ENCODE measurements at regions of chr10 and their contacts with region 1.

Region 1: DNA sequence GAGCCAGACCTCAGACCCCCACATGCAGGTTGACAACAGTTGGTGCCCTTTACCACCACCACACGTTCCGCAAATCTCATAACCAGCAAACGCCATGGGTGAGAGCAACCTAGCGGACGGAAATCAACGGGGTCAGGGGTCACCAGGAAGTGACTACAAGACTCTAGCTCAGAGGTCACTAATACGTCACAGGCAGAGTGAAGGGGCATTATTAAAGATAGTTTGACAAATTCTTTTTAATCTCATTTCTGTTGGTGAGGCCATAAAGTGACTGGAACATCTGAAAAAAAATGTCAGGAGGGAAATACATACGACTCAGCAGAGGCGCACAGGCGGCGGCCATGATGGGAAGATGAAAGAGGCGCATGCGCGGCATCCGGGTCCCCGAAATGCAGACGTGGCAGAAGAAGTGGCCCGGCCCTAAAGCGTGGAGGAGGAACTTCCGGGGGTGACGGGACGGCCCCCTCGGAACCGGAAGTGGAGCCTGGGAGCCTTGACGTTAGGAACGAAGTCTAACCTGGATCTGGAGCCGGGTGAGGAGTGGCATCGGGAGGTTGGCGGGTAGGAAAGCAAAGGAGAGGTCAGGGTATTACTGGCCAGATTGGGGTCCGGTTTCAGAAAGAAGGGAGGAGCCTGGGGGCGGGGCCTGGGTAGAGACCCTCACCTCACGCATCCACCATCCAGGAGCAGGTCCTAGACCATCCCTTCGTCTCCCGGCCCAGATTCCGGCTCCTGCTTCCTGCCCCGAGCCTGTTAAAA is at the start of gene SEC24C:
- DNase-seq: peak; percentile 95 to 96 (median 96)
- H3K4me3 ChIP-seq: peak within 1 kb of the TSS; percentile 95
- H3K4me3 Mint-ChIP-seq: peak within 1 kb of the TSS; percentile 99 to 100 (median 100)
- H3K27ac ChIP-seq: peak within 1 kb of the TSS; percentile 97
- H3K27ac Mint-ChIP-seq: peak within 1 kb of the TSS; percentile 99 to 100 (median 100)
- H3K4me1 ChIP-seq: peaks cover 38% of the 10 kb centered on the region
- H3K4me1 Mint-ChIP-seq: peaks cover 20 to 47% (median 33%) of the 10 kb centered on the region in 4 donors
- H3K27me3 ChIP-seq: no peaks in the 10 kb centered on the region
- H3K27me3 Mint-ChIP-seq: no peaks in the 10 kb centered on the region
- total RNA-seq, gene SEC24C: 126 to 127 TPM

Region 2: DNA sequence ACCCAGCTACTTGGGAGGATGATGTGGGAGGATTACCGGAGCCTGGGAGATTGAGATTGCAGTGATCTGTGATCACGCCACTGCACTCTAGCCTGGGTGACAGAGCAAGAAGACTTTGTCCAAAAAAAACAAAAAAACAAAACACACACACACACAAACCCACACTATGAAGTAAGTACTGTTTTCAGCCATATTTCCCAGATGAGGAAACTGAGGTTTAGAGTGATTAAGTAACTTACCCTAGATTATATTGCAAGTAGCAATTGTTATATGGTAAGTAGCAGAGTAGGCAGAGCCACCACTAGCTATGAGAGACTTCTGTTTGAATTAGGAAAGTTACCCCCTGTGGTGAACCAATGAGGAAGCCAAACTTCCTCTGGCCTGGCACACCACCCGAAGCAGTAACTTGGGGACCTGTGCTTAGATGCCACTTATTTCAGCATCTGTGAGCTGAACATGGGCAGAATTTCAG is 990.3 kb before region 1 on chr10:
- CTCF ChIA-PET with region 1: no interaction called
- POLR2A ChIA-PET with region 1: no interaction called
- intact Hi-C with region 1: no loop called
- DNase-seq: no peak
- H3K4me3 ChIP-seq: no peak overlapping the region
- H3K4me3 Mint-ChIP-seq: no peak overlapping the region
- H3K27ac ChIP-seq: no peak overlapping the region
- H3K27ac Mint-ChIP-seq: no peak overlapping the region
- H3K4me1 ChIP-seq: no peaks in the 10 kb centered on the region
- H3K4me1 Mint-ChIP-seq: peaks cover 12 to 19% (median 14%) of the 10 kb centered on the region in 4 donors
- H3K27me3 ChIP-seq: no peaks in the 10 kb centered on the region
- H3K27me3 Mint-ChIP-seq: no peaks in the 10 kb centered on the region

Region 3: GRCh38 chr10:73730153-73730906 is 13.8 kb before region 1 on chr10:
- CTCF ChIA-PET with region 1: interaction called, 17 read pairs
- POLR2A ChIA-PET with region 1: interaction called, 79 read pairs
- intact Hi-C with region 1: loop called (anchors 1 kb)
- DNase-seq: peak; percentile 87 to 92 (median 90)
- H3K4me3 ChIP-seq: peak overlapping the region; percentile 78 to 81
- H3K4me3 Mint-ChIP-seq: peak overlapping the region; percentile 98 to 100 (median 100)
- H3K27ac ChIP-seq: peak overlapping the region; percentile 78
- H3K27ac Mint-ChIP-seq: peak overlapping the region; percentile 97 to 100 (median 98)
- H3K4me1 ChIP-seq: peaks cover 15% of the 10 kb centered on the region
- H3K4me1 Mint-ChIP-seq: peaks cover 12 to 39% (median 21%) of the 10 kb centered on the region in 4 donors
- H3K27me3 ChIP-seq: no peaks in the 10 kb centered on the region
- H3K27me3 Mint-ChIP-seq: no peaks in the 10 kb centered on the region

Region 4: DNA sequence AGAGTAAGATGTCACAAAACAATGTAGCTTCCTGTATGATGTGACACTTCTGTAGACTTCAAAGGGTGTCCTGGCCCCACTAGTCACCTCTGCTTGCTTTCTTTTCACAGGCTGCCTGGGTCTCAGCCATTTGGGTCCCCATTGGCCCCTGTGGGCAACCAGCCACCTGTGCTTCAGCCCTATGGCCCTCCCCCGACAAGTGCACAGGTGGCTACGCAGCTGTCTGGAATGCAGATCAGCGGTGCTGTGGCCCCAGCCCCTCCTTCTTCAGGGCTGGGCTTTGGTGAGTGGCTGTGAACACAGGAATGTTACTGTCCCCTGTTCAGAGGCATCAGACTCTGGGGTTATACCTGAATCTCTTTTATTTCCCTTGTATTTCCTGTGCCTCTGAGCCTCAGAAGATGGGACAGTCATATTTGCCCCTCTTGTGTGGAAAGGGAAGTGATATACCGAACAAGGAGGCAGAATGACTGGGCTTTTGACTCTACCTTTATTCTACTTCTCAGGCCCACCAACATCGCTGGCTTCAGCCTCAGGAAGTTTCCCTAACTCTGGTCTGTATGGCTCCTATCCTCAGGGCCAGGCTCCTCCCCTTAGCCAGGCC is 15.5 kb after region 1 on chr10:
- CTCF ChIA-PET with region 1: interaction called, 3 read pairs
- POLR2A ChIA-PET with region 1: interaction called, 13 read pairs
- intact Hi-C with region 1: no loop called
- DNase-seq: peak; percentile 70 to 92 (median 73)
- H3K4me3 ChIP-seq: peak overlapping the region in 1 of 2 donors; percentile 42
- H3K4me3 Mint-ChIP-seq: peak overlapping the region; percentile 26 to 79 (median 61)
- H3K27ac ChIP-seq: peak overlapping the region; percentile 48
- H3K27ac Mint-ChIP-seq: peak overlapping the region; percentile 76 to 93 (median 90)
- H3K4me1 ChIP-seq: peaks cover 62% of the 10 kb centered on the region
- H3K4me1 Mint-ChIP-seq: peaks cover 29 to 64% (median 50%) of the 10 kb centered on the region in 4 donors
- H3K27me3 ChIP-seq: no peaks in the 10 kb centered on the region
- H3K27me3 Mint-ChIP-seq: no peaks in the 10 kb centered on the region

Region 5: DNA sequence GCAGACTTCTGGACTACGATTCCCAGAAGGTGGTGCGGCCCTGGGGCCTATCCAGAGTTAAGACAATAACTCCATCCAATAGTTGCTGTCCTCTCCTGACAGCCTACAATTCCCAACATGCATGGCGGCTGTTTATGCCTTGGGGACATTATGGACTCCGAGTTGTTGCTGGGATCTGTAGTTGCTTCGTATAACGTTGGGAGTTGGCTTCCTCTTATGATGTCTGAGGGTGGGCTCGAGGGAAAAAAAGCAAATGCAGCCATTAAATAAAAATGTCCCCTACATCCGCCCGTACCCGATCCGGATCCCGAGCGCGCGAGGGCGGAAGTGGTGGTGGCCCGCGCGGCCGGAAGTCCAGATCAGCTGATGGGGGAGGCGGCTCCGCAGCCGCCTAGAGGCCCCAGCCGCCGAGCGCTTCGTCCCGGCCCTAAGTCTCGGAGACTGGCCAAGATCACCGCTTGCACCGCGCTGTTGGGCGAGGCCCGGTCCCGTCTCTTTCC is 41.2 kb after region 1 on chr10 and contains the start of gene ZSWIM8:
- CTCF ChIA-PET with region 1: interaction called, 5 read pairs
- POLR2A ChIA-PET with region 1: interaction called, 43 read pairs
- intact Hi-C with region 1: loop called (anchors 1 kb)
- DNase-seq: peak; percentile 85 to 96 (median 89)
- H3K4me3 ChIP-seq: peak within 1 kb of the TSS; percentile 62 to 64
- H3K4me3 Mint-ChIP-seq: peak within 1 kb of the TSS; percentile 94 to 99 (median 98)
- H3K27ac ChIP-seq: peak within 1 kb of the TSS; percentile 77
- H3K27ac Mint-ChIP-seq: peak within 1 kb of the TSS; percentile 95 to 99 (median 99)
- H3K4me1 ChIP-seq: peaks cover 54% of the 10 kb centered on the region
- H3K4me1 Mint-ChIP-seq: peaks cover 35 to 67% (median 50%) of the 10 kb centered on the region in 4 donors
- H3K27me3 ChIP-seq: no peaks in the 10 kb centered on the region
- H3K27me3 Mint-ChIP-seq: peaks cover 2% of the 10 kb centered on the region in 2 donors
- total RNA-seq, gene ZSWIM8: 93.3 to 100 TPM